ENCODE measurements at regions of chr11 and their contacts with region 1.

Region 1: DNA sequence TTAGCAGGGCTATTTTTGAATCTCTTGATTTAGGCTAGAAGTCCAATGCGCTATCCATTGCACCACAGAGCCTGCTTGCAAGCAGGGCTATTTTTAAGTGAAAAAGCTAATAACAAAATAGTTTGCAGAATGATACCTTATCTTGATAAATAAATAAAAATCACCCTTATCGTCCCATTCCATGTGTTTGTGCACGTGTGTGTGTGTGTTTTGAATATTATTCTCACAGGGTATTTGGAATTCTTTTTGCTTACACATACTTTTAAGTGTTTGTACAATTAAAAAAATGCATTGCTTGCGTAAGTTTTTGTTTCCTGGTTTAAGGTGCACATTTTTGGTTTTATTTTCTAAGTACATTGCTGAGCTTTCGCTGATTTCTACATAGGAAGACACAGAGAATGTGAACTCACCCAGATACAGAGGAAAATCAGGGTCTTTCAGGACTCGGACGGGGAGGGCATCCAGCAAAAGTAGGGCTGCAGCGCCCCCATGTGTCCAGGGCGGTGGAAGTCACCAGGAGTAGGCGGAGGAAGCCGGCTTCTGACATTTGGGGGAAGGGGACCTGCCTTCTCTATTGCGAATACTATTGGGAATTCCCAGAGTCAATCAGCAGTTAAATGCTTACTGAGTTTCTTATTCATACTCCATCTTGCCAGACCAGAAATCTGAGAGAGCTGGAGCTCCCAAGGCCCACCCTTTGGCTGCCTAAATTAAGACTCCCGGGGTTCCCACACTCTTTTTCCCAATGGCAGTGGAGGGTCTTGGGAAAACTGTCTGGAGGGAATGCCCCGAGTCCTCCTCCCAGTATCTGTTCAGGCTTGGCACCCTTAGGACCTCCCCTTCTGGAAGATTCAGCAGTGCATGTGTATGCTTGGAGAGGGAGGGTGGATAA is 27.2 kb downstream of the SLC1A2 start:
- DNase-seq: peak; percentile 84
- ATAC-seq: peak; percentile 80
- H3K4me3 Mint-ChIP-seq: no peak overlapping the region
- H3K27ac Mint-ChIP-seq: no peak overlapping the region
- H3K4me1 Mint-ChIP-seq: peaks cover 15% of the 10 kb centered on the region
- H3K27me3 Mint-ChIP-seq: peaks cover 4% of the 10 kb centered on the region

Region 2: GRCh38 chr11:34585735-34586487 is 806.3 kb before region 1 on chr11:
- CTCF ChIA-PET with region 1: interaction called, 12 read pairs
- POLR2A ChIA-PET with region 1: no interaction called
- DNase-seq: no peak
- ATAC-seq: no peak
- H3K4me3 Mint-ChIP-seq: no peak overlapping the region
- H3K27ac Mint-ChIP-seq: no peak overlapping the region
- H3K4me1 Mint-ChIP-seq: no peaks in the 10 kb centered on the region
- H3K27me3 Mint-ChIP-seq: peaks cover 40% of the 10 kb centered on the region

Region 3: DNA sequence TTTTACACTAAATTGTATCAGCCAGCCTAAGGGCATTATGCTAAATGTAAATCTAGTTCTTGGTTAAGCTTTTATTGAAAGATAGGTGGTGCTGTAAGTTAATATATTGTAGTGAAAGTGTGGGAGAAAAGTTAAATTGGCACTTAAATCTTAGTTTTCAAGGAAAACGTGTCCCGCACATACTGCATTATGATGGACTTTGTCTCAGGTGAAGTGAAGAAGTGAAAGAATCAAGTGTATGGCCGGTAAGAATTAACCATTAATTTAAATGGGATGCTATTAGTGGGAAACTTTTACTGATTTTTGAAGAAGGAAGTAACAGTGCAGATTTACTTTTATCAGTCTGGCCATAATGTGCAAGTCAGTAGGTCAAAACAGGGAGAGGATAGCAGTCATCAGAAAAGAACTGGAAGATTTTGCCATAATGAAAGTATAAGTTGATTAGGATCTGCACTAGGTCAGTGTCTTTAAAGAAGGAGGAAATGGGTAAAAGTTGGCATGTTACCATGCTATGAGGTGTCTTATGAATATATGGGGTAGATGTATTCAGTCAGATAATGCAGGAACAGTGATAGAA is 394.1 kb before region 1 on chr11:
- CTCF ChIA-PET with region 1: interaction called, 24 read pairs
- POLR2A ChIA-PET with region 1: no interaction called
- DNase-seq: no peak
- ATAC-seq: peak; percentile 69
- H3K4me3 Mint-ChIP-seq: no peak overlapping the region
- H3K27ac Mint-ChIP-seq: no peak overlapping the region
- H3K4me1 Mint-ChIP-seq: peaks cover 24% of the 10 kb centered on the region
- H3K27me3 Mint-ChIP-seq: no peaks in the 10 kb centered on the region

Region 4: GRCh38 chr11:35006389-35007128 is 385.6 kb before region 1 on chr11:
- CTCF ChIA-PET with region 1: interaction called, 10 read pairs
- POLR2A ChIA-PET with region 1: no interaction called
- DNase-seq: peak; percentile 56
- ATAC-seq: peak; percentile 80
- H3K4me3 Mint-ChIP-seq: peak overlapping the region; percentile 26
- H3K27ac Mint-ChIP-seq: peak overlapping the region; percentile 33
- H3K4me1 Mint-ChIP-seq: peaks cover 56% of the 10 kb centered on the region
- H3K27me3 Mint-ChIP-seq: peaks cover 5% of the 10 kb centered on the region

Region 5: GRCh38 chr11:35525501-35526175 is 133.5 kb after region 1 on chr11 and contains the start of gene PAMR1:
- CTCF ChIA-PET with region 1: no interaction called
- POLR2A ChIA-PET with region 1: no interaction called
- DNase-seq: peak; percentile 20
- ATAC-seq: no peak
- H3K4me3 Mint-ChIP-seq: no peak within 1 kb of the TSS
- H3K27ac Mint-ChIP-seq: no peak within 1 kb of the TSS
- H3K4me1 Mint-ChIP-seq: no peaks in the 10 kb centered on the region
- H3K27me3 Mint-ChIP-seq: peaks cover 51% of the 10 kb centered on the region
- total RNA-seq, gene PAMR1: not detected

Measured in activated CD8-positive, alpha-beta T cell treated with anti-CD3 and anti-CD28 coated beads, Interleukin-2, amount 10 ng/mL, durations not matched to agents 7 days and 5 days (primary cell).